HepG2 (cell line): ENCODE measurements at regions of chr4 and their contacts with region 1.

Region 1: GRCh38 chr4:173013232-173013930 is 155.2 kb upstream of the GALNT7 start:
- DNase-seq: peak; percentile 21
- ATAC-seq: peak; percentile 70
- H3K4me3 ChIP-seq: no peak overlapping the region
- H3K27ac ChIP-seq: no peak overlapping the region
- H3K4me1 ChIP-seq: no peaks in the 10 kb centered on the region
- H3K27me3 ChIP-seq: peaks cover 0 to 1% of the 10 kb centered on the region in 2 experiments; a peak in 1 of 5 replicates
- CTCF ChIP-seq: peak; percentile 54
- EP300 ChIP-seq: no peak
- POLR2A ChIP-seq: no peak
- RAD21 ChIP-seq: no peak

Region 2: GRCh38 chr4:172953896-172954568 is 59.3 kb before region 1 on chr4:
- CTCF ChIA-PET with region 1: no interaction called
- POLR2A ChIA-PET with region 1: no interaction called
- in situ Hi-C with region 1: no loop called
- intact Hi-C with region 1: no loop called
- DNase-seq: no peak
- ATAC-seq: no peak
- H3K4me3 ChIP-seq: no peak overlapping the region
- H3K27ac ChIP-seq: no peak overlapping the region
- H3K4me1 ChIP-seq: no peaks in the 10 kb centered on the region
- H3K27me3 ChIP-seq: no peaks in the 10 kb centered on the region
- CTCF ChIP-seq: no peak
- EP300 ChIP-seq: no peak
- POLR2A ChIP-seq: no peak
- RAD21 ChIP-seq: no peak

Region 3: GRCh38 chr4:173257732-173258717 is 244.6 kb after region 1 on chr4:
- CTCF ChIA-PET with region 1: interaction called, 14 read pairs
- POLR2A ChIA-PET with region 1: no interaction called
- in situ Hi-C with region 1: loop called (anchors 5 kb)
- intact Hi-C with region 1: loop called (anchors 1 kb)
- DNase-seq: peak; percentile 29
- ATAC-seq: peak; percentile 95
- H3K4me3 ChIP-seq: no peak overlapping the region
- H3K27ac ChIP-seq: no peak overlapping the region
- H3K4me1 ChIP-seq: no peaks in the 10 kb centered on the region
- H3K27me3 ChIP-seq: no peaks in the 10 kb centered on the region; a peak in 1 of 5 replicates
- CTCF ChIP-seq: peak; percentile 74
- EP300 ChIP-seq: no peak
- POLR2A ChIP-seq: no peak
- RAD21 ChIP-seq: no peak